ENCODE measurements at regions of chr12 and their contacts with region 1.

Region 1: GRCh38 chr12:52023182-52023975 is 16.6 kb downstream of the TAMALIN start:
- DNase-seq: peak; percentile 92
- ATAC-seq: peak; percentile 38
- H3K4me3 Mint-ChIP-seq: peak overlapping the region; percentile 70
- H3K27ac Mint-ChIP-seq: no peak overlapping the region
- H3K4me1 Mint-ChIP-seq: peaks cover 35% of the 10 kb centered on the region
- H3K27me3 Mint-ChIP-seq: peaks cover 46% of the 10 kb centered on the region
- CTCF ChIP-seq: peak; percentile 96

Region 2: GRCh38 chr12:51891843-51892242 is 131.5 kb before region 1 on chr12:
- CTCF ChIA-PET with region 1: interaction called, 27 read pairs
- POLR2A ChIA-PET with region 1: no interaction called
- DNase-seq: no peak
- ATAC-seq: no peak
- H3K4me3 Mint-ChIP-seq: no peak overlapping the region
- H3K27ac Mint-ChIP-seq: no peak overlapping the region
- H3K4me1 Mint-ChIP-seq: peaks cover 22% of the 10 kb centered on the region
- H3K27me3 Mint-ChIP-seq: peaks cover 14% of the 10 kb centered on the region
- CTCF ChIP-seq: no peak

Region 3: DNA sequence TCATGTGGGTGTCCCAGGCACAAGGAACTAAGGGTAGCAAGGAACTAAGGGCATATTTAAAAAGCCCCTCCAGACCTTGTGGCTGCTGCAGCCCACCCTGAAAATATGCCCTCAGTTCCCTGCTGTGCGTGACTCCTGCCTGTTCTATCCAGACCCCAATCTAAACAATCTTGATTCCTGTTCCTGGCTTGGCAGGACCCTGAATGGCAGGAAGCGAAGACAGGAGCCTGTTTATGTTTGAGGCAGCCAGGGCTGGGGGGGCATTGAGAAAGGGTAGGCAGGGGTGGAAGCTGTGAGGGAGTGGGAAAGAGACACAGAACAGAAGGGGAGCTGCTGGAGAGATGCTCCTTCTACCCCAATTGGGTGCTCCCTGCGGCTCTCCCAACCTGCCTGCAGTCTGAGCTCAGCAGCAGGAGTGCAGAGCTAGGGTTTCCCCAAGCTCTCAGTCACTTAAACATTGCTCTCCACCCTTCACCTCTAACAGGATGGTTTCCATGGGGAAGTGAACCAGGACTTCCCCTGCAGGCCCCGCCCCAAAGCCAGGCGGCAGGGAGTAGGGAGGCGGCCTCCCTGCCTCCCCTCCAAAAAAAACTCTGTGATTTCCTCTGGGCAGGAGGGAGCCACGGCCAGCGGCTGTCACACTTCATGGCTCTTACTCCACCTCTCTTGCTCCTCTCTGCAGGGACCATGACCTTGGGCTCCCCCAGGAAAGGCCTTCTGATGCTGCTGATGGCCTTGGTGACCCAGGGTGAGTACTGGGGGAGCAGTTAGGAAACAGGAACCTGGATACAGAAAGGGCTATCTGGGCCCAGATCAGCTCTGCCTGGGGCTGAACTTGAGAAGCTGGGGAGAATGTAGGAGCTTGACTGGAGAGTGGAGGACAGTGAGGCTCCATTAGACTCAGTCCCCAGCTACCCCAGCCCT is 111.3 kb before region 1 on chr12:
- CTCF ChIA-PET with region 1: interaction called, 27 read pairs
- POLR2A ChIA-PET with region 1: no interaction called
- DNase-seq: no peak
- ATAC-seq: peak; percentile 31
- H3K4me3 Mint-ChIP-seq: no peak overlapping the region
- H3K27ac Mint-ChIP-seq: no peak overlapping the region
- H3K4me1 Mint-ChIP-seq: peaks cover 18% of the 10 kb centered on the region
- H3K27me3 Mint-ChIP-seq: peaks cover 35% of the 10 kb centered on the region
- CTCF ChIP-seq: no peak

Region 4: DNA sequence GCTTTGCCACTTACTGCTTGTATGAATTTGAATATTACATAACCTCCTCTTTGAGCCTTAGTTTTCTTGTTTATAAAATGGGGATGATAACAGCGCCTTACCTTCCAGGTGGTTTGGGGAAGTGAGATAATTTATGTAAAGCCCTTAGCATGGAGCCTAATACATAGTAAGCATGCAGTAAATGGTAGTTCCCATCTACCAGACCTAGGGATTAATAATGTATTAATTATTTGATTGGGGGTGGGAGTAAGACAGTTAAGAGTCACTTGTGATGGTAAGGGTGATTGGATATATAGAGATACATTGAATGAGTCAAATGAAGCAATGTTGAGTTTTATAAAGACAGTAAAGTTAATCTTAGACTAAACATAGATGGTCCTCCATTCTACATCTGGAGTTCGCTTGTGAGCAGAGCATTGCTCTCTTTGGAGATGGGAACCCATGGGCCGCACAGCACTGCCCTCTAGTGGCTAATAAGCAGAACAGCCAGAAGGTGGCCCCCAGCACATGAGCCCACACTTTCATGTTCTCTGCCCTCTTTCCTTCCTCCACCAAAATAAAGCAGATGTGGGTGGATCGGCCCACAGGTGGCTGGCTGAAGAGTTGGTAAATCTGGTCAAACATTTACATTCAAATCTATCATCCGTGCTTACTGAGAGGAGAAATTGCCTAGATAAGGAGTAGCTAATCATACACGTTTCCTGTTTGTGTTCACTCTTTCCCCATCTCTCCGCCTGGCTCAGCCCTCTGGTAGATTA is 43.1 kb before region 1 on chr12:
- CTCF ChIA-PET with region 1: interaction called, 1,431 read pairs
- POLR2A ChIA-PET with region 1: no interaction called
- DNase-seq: peak; percentile 68
- ATAC-seq: peak; percentile 96
- H3K4me3 Mint-ChIP-seq: no peak overlapping the region
- H3K27ac Mint-ChIP-seq: no peak overlapping the region
- H3K4me1 Mint-ChIP-seq: no peaks in the 10 kb centered on the region; the same call in 1 of the 2 replicates
- H3K27me3 Mint-ChIP-seq: no peaks in the 10 kb centered on the region
- CTCF ChIP-seq: peak; percentile 84

Region 5: GRCh38 chr12:52058631-52059361 is 35.4 kb after region 1 on chr12:
- CTCF ChIA-PET with region 1: interaction called, 78 read pairs
- POLR2A ChIA-PET with region 1: no interaction called
- DNase-seq: no peak
- ATAC-seq: no peak
- H3K4me3 Mint-ChIP-seq: no peak overlapping the region
- H3K27ac Mint-ChIP-seq: no peak overlapping the region
- H3K4me1 Mint-ChIP-seq: no peaks in the 10 kb centered on the region
- H3K27me3 Mint-ChIP-seq: no peaks in the 10 kb centered on the region
- CTCF ChIP-seq: no peak

Region 6: DNA sequence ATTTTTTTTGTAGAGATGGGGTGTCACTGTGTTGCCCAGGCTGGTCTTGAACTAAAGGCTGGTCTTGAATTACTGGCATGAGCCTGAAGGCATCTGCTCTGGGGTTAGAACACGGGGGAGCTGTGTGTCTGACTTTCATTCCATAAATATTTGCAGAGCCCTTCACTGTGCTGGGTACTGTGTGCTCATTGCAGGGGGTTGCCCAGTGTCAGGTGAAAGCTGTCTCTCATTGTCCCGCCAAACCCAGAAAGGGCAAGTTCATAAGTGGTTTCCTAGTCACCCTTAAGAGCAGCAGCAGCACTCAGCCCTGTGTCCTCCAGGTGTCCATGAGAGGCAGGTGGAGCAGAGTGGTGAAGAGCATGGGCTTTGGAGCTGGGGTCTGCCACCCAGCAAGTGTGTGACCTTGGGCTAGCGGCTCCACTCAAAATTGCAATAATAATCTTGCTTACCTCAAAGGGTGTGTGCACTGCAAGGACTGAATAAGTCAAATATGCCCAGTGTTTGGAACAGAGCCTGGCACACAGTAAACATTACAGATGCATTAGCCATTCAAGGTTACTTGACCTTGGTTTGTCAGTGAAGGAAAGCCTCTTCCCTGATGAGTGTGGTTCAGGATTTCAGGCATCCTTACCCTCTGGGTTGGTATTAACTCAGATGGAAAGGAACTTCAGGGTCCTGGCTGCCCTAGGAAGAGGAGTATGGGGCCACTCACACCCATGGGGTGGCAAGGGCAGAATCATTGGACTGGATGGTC is 51.8 kb after region 1 on chr12:
- CTCF ChIA-PET with region 1: interaction called, 388 read pairs
- POLR2A ChIA-PET with region 1: interaction called, 7 read pairs
- DNase-seq: no peak
- ATAC-seq: no peak
- H3K4me3 Mint-ChIP-seq: no peak overlapping the region
- H3K27ac Mint-ChIP-seq: no peak overlapping the region
- H3K4me1 Mint-ChIP-seq: peaks cover 14% of the 10 kb centered on the region
- H3K27me3 Mint-ChIP-seq: no peaks in the 10 kb centered on the region
- CTCF ChIP-seq: no peak

Region 7: DNA sequence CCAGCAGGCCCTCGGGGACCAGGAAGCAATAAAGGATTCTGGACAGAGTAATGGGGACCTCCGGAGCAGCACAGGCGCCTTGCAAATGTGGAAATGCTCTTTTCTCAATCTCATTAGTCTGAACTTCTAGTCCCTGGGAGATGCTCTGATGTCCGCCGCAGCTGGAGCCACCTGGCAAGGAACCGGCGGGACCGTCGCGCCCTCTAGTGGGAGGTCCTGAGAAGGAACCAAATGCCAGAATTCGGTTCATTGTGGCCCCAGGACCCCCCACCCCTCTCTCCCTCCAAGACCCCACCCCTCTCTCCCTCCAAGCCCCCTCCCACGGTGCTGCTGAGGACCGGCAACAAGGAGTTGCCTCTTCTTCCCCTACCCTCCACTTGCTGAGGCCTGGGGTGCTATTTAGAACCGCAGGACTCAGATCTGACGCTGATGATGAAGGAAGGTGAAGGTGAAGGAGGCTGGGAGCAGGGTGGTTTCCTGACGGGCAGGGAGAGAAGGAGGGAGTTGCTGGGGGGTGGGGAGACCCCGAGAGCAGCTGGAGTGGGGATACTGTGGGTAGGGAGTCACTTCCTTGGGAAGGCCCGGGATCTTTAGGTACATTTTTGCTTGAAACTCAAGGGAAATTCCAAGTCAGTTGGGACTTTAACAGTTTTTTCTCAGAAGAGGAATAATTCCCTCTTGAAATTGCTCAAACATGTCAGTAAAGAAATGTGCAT is 98.6 kb after region 1 on chr12:
- CTCF ChIA-PET with region 1: interaction called, 435 read pairs
- POLR2A ChIA-PET with region 1: interaction called, 13 read pairs
- DNase-seq: peak; percentile 84
- ATAC-seq: peak; percentile 4; the same call in 1 of the 2 replicates
- H3K4me3 Mint-ChIP-seq: peak overlapping the region; percentile 50
- H3K27ac Mint-ChIP-seq: no peak overlapping the region
- H3K4me1 Mint-ChIP-seq: peaks cover 84% of the 10 kb centered on the region
- H3K27me3 Mint-ChIP-seq: peaks cover 7% of the 10 kb centered on the region; the same call in 1 of the 2 replicates
- CTCF ChIP-seq: peak; percentile 63